AG04449 (cell line): ENCODE measurements at regions of chr1 and their contacts with region 1.

Region 1: DNA sequence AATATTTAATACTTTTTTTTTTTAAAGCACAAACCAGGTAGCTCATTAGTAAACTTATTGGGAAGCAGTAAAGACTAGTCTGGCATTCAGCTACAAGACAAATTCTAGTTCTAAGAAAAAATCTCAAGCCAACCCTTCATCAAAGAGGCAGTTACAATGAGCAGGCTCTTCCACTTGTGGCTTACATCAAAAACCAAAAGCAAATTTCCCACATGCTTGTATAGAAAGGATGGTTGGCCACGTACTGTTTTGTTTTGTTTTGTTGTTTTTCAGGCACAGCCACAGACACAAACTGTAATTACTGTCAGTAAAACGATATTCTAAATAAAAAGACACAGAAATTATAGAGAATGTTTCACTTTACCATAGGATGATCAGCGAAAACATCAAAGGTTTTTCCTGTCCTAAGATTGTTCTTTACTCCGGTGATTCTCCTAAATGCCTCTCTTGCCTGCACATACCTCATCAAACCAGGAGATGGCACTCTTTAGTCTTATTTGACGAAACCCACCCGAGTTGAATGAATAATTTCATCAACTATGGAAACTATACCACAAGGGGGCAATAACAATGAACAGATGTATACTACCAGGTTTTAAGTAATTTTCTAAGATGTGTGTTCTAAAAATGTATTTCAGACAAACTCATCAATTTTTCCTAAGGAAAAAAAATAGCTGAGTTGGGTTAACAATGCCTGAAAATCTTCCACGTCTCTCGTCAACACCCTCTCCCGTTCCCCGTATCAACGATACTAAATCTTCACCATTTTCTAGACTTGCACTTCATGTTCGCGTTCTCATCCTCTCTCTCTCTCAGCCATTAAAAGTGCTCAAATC is 26.9 kb downstream of the RPL5 start:
- DNase-seq: peak; percentile 53
- H3K4me3 ChIP-seq: no peak overlapping the region
- CTCF ChIP-seq: peak; percentile 74

Region 2: GRCh38 chr1:92831762-92832536 is 26.8 kb before region 1 on chr1 and contains the start of gene RPL5:
- CTCF ChIA-PET with region 1: interaction called, 21 read pairs
- POLR2A ChIA-PET with region 1: interaction called, 4 read pairs
- DNase-seq: peak; percentile 73
- H3K4me3 ChIP-seq: peak within 1 kb of the TSS; percentile 98
- CTCF ChIP-seq: peak; percentile 98

Region 3: DNA sequence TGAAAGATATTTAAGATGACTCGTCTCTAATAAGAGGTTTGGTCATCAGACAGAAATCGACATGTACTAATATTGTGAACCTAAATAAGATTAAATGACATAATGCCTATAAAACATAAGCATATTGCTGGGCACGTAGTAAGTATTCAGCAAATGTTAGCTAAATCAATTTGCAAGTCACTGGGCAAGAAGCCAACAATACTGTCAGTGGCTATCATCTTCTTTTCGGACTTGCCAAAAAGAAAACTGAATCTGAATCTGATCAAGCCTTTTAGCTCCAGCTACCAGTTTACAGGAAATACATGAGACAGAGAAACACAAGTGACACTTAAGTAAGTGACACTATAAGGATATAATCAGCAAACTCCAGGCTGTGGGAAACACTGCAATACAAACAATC is 19.0 kb after region 1 on chr1:
- CTCF ChIA-PET with region 1: interaction called, 51 read pairs
- POLR2A ChIA-PET with region 1: no interaction called
- DNase-seq: no peak
- H3K4me3 ChIP-seq: no peak overlapping the region
- CTCF ChIP-seq: no peak

Region 4: DNA sequence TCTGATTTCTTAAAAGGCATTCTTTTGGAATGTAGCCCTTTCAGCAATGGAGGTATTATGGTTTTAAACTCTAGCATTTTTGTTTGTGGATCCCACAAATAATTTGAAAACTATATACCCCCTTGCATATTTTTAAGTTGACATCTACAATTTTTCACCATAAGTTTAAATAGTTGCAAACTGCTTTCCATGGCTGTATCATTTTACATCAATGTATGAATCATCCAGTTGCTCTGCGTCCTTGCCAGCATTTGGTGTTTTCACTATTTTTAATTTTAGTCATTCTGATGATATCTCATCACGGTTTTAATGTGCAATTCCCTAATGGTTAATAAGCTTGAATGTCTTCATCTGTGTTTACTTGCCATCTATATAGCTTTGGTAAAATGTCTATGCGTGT is 81.8 kb after region 1 on chr1:
- CTCF ChIA-PET with region 1: interaction called, 18 read pairs
- POLR2A ChIA-PET with region 1: no interaction called
- DNase-seq: peak; percentile 57
- H3K4me3 ChIP-seq: no peak overlapping the region
- CTCF ChIP-seq: no peak

Region 5: DNA sequence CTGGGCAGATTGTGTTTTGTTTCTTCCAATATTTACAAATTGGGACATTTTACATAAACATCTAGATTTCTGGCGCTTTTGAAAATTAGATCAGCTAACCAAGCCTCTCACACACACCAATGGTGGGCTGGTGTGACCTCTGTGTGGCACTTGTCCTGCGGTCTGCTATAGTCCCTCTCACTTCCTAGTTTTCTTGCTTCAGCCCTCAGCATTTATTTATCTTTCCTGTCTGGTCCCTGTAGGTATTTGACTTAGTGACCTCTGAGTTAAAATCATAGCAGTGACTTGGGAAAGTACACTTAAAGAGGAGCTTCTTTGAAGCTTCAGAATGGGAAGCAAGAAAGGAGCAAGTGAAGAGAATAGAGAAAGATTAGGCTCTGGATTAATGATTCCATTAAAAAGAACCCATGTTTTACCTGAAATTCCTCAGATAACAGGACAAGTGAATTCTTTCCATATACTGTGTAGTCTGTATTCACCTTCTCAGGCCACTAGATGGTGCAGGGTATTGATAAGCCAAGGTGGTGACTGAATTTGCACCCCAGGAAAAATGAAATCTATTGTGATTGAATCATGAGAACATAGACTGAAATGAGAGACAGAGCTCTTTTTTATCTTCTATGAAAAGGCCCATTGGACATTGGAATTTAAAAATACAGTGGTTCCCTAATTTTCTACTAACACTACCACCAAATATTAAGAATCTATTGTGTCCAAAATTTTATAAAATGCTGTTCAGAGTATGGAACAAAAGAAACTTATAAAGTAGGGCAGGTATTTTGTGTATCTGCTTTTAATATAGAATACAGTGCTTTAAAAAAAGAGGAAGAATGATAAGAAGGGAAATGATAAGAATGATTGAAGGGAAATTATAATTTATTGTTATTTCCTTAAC is 109.6 kb after region 1 on chr1:
- CTCF ChIA-PET with region 1: interaction called, 97 read pairs
- POLR2A ChIA-PET with region 1: no interaction called
- DNase-seq: no peak
- H3K4me3 ChIP-seq: no peak overlapping the region
- CTCF ChIP-seq: peak; percentile 31

Region 6: GRCh38 chr1:92987462-92987861 is 128.7 kb after region 1 on chr1:
- CTCF ChIA-PET with region 1: interaction called, 493 read pairs
- POLR2A ChIA-PET with region 1: interaction called, 3 read pairs
- DNase-seq: no peak
- H3K4me3 ChIP-seq: no peak overlapping the region
- CTCF ChIP-seq: no peak

Region 7: DNA sequence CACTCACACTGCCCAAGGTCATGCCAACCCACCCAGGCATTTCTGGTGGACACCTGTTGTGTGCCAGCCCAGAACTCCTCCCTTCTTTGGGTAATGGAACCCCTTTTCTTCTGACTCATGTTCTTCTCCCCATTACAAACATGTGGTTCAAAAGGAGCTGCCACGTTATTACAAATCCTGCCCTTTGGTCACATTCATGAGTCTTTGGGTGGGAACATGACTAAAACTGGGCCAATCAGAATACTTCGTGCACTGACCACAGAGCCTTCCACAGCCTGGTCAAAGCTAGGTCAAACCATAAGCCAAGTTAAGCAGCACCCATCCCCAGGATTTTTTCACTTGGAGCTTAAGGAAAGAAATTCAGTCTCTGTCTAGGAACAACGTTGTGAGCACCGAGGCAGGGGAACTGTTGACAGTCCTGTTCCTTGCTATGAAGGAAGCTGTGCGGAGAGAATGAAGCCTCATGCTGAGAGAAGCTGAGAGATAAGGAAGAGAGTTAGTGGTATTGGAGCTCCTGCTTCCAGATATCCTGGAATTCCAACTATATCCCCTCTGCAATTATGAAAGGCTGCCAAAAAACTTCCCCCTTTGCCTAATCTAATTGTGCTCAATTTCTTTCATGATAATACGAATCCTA is 149.3 kb after region 1 on chr1:
- CTCF ChIA-PET with region 1: interaction called, 65 read pairs
- POLR2A ChIA-PET with region 1: no interaction called
- DNase-seq: no peak
- H3K4me3 ChIP-seq: no peak overlapping the region
- CTCF ChIP-seq: no peak